Activated B cell treated with CpG ODN at 0.5 μM for 24 hours (primary cell): ENCODE measurements at regions of chr19 and their contacts with region 1.

Region 1: GRCh38 chr19:48899781-48900476 is at the start of gene NUCB1:
- DNase-seq: peak; percentile 92
- ATAC-seq: peak; percentile 98
- H3K4me3 Mint-ChIP-seq: peak within 1 kb of the TSS; percentile 97
- H3K27ac Mint-ChIP-seq: peak within 1 kb of the TSS; percentile 93
- H3K4me1 Mint-ChIP-seq: peaks cover 35% of the 10 kb centered on the region
- H3K27me3 Mint-ChIP-seq: peaks cover 2% of the 10 kb centered on the region
- CTCF ChIP-seq: no peak
- total RNA-seq, gene NUCB1: 116 and 126 TPM in 2 replicates

Region 2: GRCh38 chr19:48858984-48859710 is 40.8 kb before region 1 on chr19:
- CTCF ChIA-PET with region 1: no interaction called
- POLR2A ChIA-PET with region 1: interaction called, 5 read pairs
- intact Hi-C with region 1: loop called (anchors 1 kb)
- DNase-seq: peak; percentile 66
- ATAC-seq: peak; percentile 84
- H3K4me3 Mint-ChIP-seq: peak overlapping the region; percentile 92
- H3K27ac Mint-ChIP-seq: peak overlapping the region; percentile 87
- H3K4me1 Mint-ChIP-seq: peaks cover 7% of the 10 kb centered on the region
- H3K27me3 Mint-ChIP-seq: no peaks in the 10 kb centered on the region
- CTCF ChIP-seq: no peak

Region 3: DNA sequence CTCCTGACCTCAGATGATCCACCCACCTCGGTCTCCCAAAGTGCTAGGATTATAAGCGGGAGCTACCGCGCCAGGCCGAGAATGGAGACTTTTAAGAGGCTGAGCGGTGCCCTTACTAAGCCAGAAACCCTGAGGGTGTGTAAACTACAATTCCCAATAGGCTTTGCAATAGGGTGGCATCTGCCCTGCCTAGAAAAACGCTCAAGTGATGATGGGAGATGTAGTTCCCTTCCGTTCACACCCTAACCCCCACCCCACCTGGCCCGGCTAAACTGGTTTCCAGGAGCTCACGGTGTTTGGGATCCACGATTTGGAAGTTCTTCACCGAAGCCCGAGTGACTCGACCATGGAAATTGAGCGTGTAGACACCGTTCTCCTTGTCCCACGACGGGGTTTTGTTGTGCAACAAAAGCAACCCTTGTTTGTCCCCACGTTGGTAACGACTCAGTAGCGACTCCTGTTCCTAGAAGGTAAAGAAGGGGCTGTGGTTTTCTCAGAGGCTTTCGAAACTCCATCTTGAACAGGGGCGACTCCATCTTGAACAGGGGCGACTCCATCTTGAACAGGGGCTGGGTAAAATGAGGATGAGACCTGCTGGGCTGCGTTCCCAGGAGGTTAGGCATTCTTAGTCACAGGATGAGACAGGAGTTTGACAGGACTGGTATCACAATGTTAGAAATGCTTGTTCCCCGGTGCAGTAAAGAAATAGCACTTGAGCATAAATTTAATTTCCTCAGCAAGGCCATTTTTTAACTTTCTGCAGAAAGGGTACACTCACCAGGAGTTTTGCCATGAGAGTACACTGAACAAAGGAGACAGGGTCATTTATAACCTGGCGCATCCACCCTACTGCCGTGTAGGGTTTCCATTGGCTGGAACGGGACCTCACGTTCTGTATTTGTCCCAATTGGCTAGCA is 17.9 kb before region 1 on chr19:
- CTCF ChIA-PET with region 1: no interaction called
- POLR2A ChIA-PET with region 1: interaction called, 55 read pairs
- intact Hi-C with region 1: no loop called
- DNase-seq: no peak
- ATAC-seq: peak; percentile 71
- H3K4me3 Mint-ChIP-seq: no peak overlapping the region
- H3K27ac Mint-ChIP-seq: peak overlapping the region; percentile 41
- H3K4me1 Mint-ChIP-seq: peaks cover 19% of the 10 kb centered on the region
- H3K27me3 Mint-ChIP-seq: no peaks in the 10 kb centered on the region
- CTCF ChIP-seq: no peak

Region 4: DNA sequence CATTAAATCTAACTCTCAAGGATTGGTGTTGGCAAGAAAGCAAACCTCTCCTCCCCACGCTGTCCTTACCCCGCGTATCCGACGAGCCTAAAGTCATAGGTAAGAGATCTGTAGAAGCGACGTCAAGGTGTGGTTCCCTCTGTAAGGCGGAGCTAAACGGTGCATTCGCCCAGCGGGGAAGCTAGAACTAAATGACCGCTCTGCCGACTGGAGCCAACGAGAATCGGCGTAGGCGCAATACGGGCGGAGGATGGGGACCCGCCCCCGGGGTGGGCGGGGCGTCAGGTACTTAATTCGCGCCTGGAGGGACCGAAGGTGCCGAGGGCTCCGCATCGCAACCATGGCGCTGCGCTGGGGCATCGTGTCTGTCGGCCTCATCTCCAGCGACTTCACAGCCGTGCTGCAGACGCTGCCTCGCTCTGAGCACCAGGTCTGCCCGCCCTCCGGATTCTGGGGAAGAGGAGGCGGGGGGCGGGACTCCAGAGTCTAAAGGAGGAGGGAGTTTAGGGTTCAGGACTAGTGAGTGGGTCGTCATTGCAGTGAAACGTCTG is 33.5 kb after region 1 on chr19 and contains the start of gene DHDH:
- CTCF ChIA-PET with region 1: no interaction called
- POLR2A ChIA-PET with region 1: no interaction called
- intact Hi-C with region 1: loop called (anchors 5 kb)
- DNase-seq: peak; percentile 73
- ATAC-seq: peak; percentile 99
- H3K4me3 Mint-ChIP-seq: peak within 1 kb of the TSS; percentile 83
- H3K27ac Mint-ChIP-seq: peak within 1 kb of the TSS; percentile 63
- H3K4me1 Mint-ChIP-seq: peaks cover 10% of the 10 kb centered on the region
- H3K27me3 Mint-ChIP-seq: peaks cover 3% of the 10 kb centered on the region
- CTCF ChIP-seq: no peak
- total RNA-seq, gene DHDH: not detected in 2 replicates

Region 5: DNA sequence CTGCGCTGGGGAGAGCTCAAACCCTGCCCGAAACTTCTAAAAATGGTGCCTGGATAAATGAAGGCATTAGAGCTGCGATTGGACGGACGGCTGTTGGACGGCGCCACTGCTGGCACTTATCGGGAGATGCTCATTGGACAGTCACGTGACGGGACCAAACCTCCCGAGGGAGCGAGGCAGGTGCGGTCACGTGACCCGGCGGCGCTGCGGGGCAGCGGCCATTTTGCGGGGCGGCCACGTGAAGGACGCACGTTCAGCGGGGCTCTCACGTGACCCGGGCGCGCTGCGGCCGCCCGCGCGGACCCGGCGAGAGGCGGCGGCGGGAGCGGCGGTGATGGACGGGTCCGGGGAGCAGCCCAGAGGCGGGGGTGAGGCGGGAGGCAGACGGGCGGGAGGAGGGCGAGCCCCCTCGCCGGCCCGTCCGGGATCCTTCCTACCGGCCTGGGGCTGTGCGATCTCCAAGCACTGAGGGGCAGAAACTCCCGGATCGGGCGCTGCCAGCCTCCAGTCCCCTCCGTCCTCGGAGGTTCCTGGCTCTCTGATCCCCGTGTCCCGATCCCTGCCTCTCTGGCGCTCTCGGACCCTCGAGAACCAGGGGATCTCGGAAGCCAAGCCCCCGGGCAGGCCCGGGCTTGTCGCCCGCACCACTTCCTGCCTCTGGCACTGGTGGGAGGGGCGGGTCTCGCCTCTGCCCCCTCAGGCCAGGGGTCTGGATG is 54.8 kb after region 1 on chr19 and contains the start of gene BAX:
- CTCF ChIA-PET with region 1: no interaction called
- POLR2A ChIA-PET with region 1: interaction called, 3 read pairs
- intact Hi-C with region 1: loop called (anchors 1 kb)
- DNase-seq: peak; percentile 93
- ATAC-seq: peak; percentile 89
- H3K4me3 Mint-ChIP-seq: peak within 1 kb of the TSS; percentile 91
- H3K27ac Mint-ChIP-seq: peak within 1 kb of the TSS; percentile 87
- H3K4me1 Mint-ChIP-seq: peaks cover 26% of the 10 kb centered on the region
- H3K27me3 Mint-ChIP-seq: no peaks in the 10 kb centered on the region
- CTCF ChIP-seq: no peak
- total RNA-seq, gene BAX: 111 and 129 TPM in 2 replicates

Region 6: DNA sequence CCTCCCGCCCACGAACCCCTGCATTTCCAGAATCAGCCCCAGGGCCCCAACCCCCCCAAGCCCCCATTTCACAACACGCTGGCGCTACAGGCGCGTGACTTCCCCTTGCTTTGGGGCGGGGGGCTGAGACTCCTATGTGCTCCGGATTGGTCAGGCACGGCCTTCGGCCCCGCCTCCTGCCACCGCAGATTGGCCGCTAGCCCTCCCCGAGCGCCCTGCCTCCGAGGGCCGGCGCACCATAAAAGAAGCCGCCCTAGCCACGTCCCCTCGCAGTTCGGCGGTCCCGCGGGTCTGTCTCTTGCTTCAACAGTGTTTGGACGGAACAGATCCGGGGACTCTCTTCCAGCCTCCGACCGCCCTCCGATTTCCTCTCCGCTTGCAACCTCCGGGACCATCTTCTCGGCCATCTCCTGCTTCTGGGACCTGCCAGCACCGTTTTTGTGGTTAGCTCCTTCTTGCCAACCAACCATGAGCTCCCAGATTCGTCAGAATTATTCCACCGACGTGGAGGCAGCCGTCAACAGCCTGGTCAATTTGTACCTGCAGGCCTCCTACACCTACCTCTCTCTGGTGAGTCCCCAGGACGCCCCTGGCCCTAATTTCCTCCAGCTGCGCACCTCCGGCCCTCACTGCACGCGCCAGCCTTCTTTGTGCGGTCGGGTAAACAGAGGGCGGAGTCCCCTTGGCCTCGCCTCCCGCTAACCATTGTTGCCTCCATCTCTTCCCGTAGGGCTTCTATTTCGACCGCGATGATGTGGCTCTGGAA is 65.3 kb after region 1 on chr19 and contains the start of gene FTL:
- CTCF ChIA-PET with region 1: interaction called, 6 read pairs
- POLR2A ChIA-PET with region 1: interaction called, 10 read pairs
- intact Hi-C with region 1: loop called (anchors 2 kb)
- DNase-seq: peak; percentile 88
- ATAC-seq: peak; percentile 80
- H3K4me3 Mint-ChIP-seq: peak within 1 kb of the TSS; percentile 99
- H3K27ac Mint-ChIP-seq: peak within 1 kb of the TSS; percentile 99
- H3K4me1 Mint-ChIP-seq: peaks cover 70% of the 10 kb centered on the region
- H3K27me3 Mint-ChIP-seq: no peaks in the 10 kb centered on the region
- CTCF ChIP-seq: no peak
- total RNA-seq, gene FTL: 888 and 935 TPM in 2 replicates

Region 7: GRCh38 chr19:49085020-49085867 is 185.3 kb after region 1 on chr19 and contains the start of gene SNRNP70:
- CTCF ChIA-PET with region 1: no interaction called
- POLR2A ChIA-PET with region 1: no interaction called
- intact Hi-C with region 1: loop called (anchors 1 kb)
- DNase-seq: peak; percentile 99
- ATAC-seq: peak; percentile 97
- H3K4me3 Mint-ChIP-seq: peak within 1 kb of the TSS; percentile 93
- H3K27ac Mint-ChIP-seq: peak within 1 kb of the TSS; percentile 93
- H3K4me1 Mint-ChIP-seq: peaks cover 41% of the 10 kb centered on the region
- H3K27me3 Mint-ChIP-seq: peaks cover 6% of the 10 kb centered on the region
- CTCF ChIP-seq: no peak
- total RNA-seq, gene SNRNP70: 268 and 298 TPM in 2 replicates

Region 8: DNA sequence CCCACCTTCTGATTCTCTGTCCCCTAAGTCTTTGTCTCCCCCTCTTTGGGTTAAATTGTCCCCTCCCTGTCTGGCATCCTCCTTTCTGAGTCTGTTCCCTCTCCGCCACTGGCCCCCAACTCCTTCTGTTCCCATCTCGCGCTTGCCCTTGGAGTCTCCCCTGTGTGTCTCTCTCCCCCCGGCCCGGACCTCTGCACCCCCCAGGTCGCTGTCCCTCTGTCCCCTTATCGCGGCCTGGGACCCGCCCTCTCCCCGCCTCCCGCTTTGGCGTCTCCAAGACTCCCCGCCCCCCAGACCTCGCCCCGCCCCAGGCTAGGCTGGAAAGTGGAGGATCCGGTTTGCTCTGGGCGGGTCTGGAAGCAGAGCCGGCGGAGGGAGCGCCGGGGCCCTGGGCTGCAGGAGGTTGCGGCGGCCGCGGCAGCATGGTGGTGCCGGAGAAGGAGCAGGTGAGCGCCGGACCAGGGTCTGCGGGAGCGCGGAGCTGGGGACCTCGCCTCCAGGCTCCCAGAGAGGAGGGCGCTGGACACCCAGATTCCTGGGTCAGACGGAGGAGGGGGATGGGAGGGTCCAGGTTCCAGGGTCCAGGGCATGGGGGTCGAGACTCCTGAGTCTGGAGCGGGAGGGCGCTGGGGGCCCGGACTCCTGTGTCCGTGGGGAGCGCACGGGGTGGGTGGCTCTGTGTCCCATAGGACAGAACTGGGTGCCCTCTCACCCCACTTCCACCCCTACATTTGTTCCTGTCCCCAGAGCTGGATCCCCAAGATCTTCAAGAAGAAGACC is 257.7 kb after region 1 on chr19 and contains the start of gene TRPM4:
- CTCF ChIA-PET with region 1: no interaction called
- POLR2A ChIA-PET with region 1: no interaction called
- intact Hi-C with region 1: no loop called
- DNase-seq: no peak
- ATAC-seq: peak; percentile 31
- H3K4me3 Mint-ChIP-seq: no peak within 1 kb of the TSS
- H3K27ac Mint-ChIP-seq: no peak within 1 kb of the TSS
- H3K4me1 Mint-ChIP-seq: peaks cover 6% of the 10 kb centered on the region
- H3K27me3 Mint-ChIP-seq: peaks cover 56% of the 10 kb centered on the region
- CTCF ChIP-seq: no peak
- total RNA-seq, gene TRPM4: not detected in 2 replicates